Esophagus squamous epithelium (tissue), 5 donors: ENCODE measurements at regions of chr14 and their contacts with region 1.

Region 1: GRCh38 chr14:96588410-96589257 is 86.5 kb downstream of the PAPOLA start:
- DNase-seq: no peak
- H3K4me3 ChIP-seq: no peak overlapping the region
- H3K27ac ChIP-seq: no peak overlapping the region
- H3K4me1 ChIP-seq: peaks cover 10 to 12% (median 10%) of the 10 kb centered on the region in 3 donors
- H3K27me3 ChIP-seq: peaks cover 0 to 57% (median 0%) of the 10 kb centered on the region in 4 donors
- CTCF ChIP-seq: no peak
- POLR2A ChIP-seq: no peak

Region 2: DNA sequence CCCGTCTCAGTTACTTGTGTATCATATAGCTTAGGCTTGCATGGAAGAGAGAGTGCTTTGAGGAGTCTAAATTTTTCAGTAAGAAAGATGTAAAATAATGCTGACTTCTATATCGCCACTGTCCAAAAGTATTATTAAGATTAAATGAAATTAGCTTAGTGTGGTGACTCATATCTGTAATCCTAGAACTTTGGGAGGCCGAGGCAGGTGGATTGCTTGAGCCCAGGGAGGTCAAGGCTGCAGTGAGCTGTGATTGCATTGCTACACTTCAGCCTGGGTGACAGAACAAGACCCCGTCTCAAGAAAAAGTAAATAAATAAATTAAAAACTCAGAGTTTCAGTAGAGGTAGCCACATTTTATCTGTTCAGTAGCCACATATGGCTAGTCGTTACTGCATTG is 63.2 kb before region 1 on chr14:
- intact Hi-C with region 1: no loop called
- DNase-seq: no peak
- H3K4me3 ChIP-seq: no peak overlapping the region
- H3K27ac ChIP-seq: no peak overlapping the region
- H3K4me1 ChIP-seq: no peaks in the 10 kb centered on the region
- H3K27me3 ChIP-seq: no peaks in the 10 kb centered on the region
- CTCF ChIP-seq: no peak
- POLR2A ChIP-seq: no peak

Region 3: DNA sequence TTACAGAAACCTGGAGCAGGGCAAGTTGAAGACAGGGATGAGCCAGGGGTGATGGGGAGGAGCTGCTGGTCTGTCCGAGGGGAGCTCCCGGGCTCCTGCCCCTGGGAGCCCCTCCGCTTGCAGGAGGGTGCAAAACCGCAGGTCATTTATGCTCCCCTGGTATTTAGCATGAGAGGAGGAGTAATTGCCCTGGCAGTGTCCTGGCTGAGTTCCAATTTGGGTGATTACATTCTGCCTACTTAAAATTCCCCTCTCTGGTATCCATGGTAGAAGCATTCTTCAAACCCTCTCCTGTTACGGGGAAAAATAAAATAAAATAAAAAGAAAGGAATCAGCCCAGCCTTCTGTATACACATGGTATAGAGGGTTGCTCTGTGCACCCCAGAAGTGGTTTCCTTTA is 146.9 kb after region 1 on chr14:
- intact Hi-C with region 1: loop called (anchors 5 kb)
- DNase-seq: no peak
- H3K4me3 ChIP-seq: no peak overlapping the region
- H3K27ac ChIP-seq: no peak overlapping the region
- H3K4me1 ChIP-seq: no peaks in the 10 kb centered on the region
- H3K27me3 ChIP-seq: peaks cover 0 to 82% (median 0%) of the 10 kb centered on the region in 4 donors
- CTCF ChIP-seq: no peak
- POLR2A ChIP-seq: no peak